ENCODE measurements at regions of chr11 and their contacts with region 1.

Region 1: GRCh38 chr11:111299101-111300026 is 1.0 kb downstream of the POU2AF3 start:
- DNase-seq: no peak
- H3K4me3 ChIP-seq: peak overlapping the region; percentile 38 to 61 (median 41)
- H3K27ac ChIP-seq: no peak overlapping the region
- H3K4me1 ChIP-seq: no peaks in the 10 kb centered on the region
- H3K27me3 ChIP-seq: peaks cover 38% of the 10 kb centered on the region
- CTCF ChIP-seq: peak; percentile 10 to 67 (median 65)

Region 2: GRCh38 chr11:111446404-111447111 is 147.2 kb after region 1 on chr11:
- dilution Hi-C with region 1: loop called (anchors 25 kb)
- DNase-seq: peak; percentile 64
- H3K4me3 ChIP-seq: no peak overlapping the region
- H3K27ac ChIP-seq: no peak overlapping the region
- H3K4me1 ChIP-seq: no peaks in the 10 kb centered on the region
- H3K27me3 ChIP-seq: no peaks in the 10 kb centered on the region
- CTCF ChIP-seq: peak; percentile 81 to 98 (median 98)

Measured in keratinocyte (primary cell).